Caco-2 (cell line): ENCODE measurements at regions of chr3 and their contacts with region 1.

Region 1: DNA sequence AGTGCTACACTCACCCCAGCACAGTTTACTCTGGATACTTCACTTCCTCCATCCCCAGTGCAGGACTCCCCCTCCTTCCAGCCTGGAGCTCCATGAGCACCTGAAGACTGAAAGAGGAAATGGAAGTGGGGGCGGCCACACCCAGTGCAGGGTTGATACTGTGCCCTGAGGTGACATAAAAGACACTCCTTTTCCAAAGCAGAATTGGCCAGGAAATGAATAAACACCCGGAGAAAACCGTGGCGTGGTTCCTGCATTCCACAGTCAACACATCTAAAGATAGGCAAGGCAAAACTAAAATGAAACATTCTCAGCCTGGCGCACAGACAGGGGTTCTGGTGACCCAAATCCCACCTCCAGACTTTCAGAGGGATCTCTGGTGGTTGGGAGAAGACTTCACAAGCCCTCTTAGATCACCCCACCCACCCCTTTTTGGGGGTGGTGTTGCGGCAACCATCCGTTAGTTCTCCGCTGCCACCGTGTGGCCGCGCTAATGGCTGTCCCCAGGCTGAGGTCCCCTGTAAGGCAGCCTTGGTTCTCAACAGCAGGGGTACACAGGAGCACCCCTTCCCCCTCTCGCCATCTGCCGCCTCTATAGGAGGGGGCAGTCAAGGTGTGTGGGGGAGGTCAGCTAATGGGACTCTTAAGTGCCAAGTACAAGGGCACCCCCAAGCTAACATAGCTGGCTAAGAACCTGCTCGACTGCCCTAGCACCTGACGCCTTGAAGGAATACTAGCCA is 2.5 kb upstream of the MST1R start:
- DNase-seq: peak; percentile 63 to 72
- H3K4me3 ChIP-seq: no peak overlapping the region
- H3K4me3 Mint-ChIP-seq: peak overlapping the region; percentile 58
- H3K27ac Mint-ChIP-seq: peak overlapping the region; percentile 71
- H3K4me1 ChIP-seq: peaks cover 46% of the 10 kb centered on the region
- H3K4me1 Mint-ChIP-seq: peaks cover 7% of the 10 kb centered on the region
- H3K27me3 ChIP-seq: no peaks in the 10 kb centered on the region
- H3K27me3 Mint-ChIP-seq: no peaks in the 10 kb centered on the region
- CTCF ChIP-seq: peak; percentile 69 to 90

Region 2: DNA sequence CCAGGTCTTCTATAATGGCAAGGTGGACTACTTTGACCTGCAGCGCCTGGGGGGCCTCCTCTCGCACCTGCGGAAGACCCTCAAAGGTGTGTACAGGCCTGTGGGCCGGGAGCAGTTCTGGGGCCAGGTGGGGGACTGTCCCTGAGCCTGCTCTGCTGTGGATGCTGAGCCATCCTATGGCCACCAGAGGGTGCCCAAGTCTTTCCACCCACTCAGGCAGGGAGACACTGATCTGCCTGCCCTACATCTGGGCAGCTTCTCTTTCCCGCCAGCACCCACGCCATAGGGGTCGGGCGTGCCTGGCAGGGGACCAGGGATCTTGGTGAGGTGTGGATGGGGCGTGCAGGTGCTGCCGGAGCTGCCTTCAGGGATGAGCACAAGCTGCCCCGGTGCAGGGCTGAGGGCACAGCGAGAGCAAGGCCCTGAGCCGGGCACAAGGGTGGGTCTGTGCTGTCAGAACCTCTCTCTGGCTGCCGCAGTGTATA is 202.7 kb before region 1 on chr3:
- CTCF ChIA-PET with region 1: no interaction called
- POLR2A ChIA-PET with region 1: no interaction called
- intact Hi-C with region 1: loop called (anchors 5 kb)
- DNase-seq: peak; percentile 67 to 72
- H3K4me3 ChIP-seq: no peak overlapping the region
- H3K4me3 Mint-ChIP-seq: no peak overlapping the region
- H3K27ac Mint-ChIP-seq: no peak overlapping the region
- H3K4me1 ChIP-seq: no peaks in the 10 kb centered on the region
- H3K4me1 Mint-ChIP-seq: no peaks in the 10 kb centered on the region
- H3K27me3 ChIP-seq: no peaks in the 10 kb centered on the region
- H3K27me3 Mint-ChIP-seq: no peaks in the 10 kb centered on the region
- CTCF ChIP-seq: peak; percentile 71 to 87

Region 3: GRCh38 chr3:49802719-49803464 is 103.3 kb before region 1 on chr3 and contains the start of gene INKA1:
- CTCF ChIA-PET with region 1: interaction called, 5 read pairs
- POLR2A ChIA-PET with region 1: no interaction called
- intact Hi-C with region 1: loop called (anchors 1 kb)
- DNase-seq: peak; percentile 82 to 89
- H3K4me3 ChIP-seq: peak within 1 kb of the TSS; percentile 74
- H3K4me3 Mint-ChIP-seq: peak within 1 kb of the TSS; percentile 91
- H3K27ac Mint-ChIP-seq: peak within 1 kb of the TSS; percentile 71
- H3K4me1 ChIP-seq: no peaks in the 10 kb centered on the region
- H3K4me1 Mint-ChIP-seq: peaks cover 16% of the 10 kb centered on the region
- H3K27me3 ChIP-seq: no peaks in the 10 kb centered on the region
- H3K27me3 Mint-ChIP-seq: peaks cover 2% of the 10 kb centered on the region
- CTCF ChIP-seq: peak; percentile 78 to 88
- total RNA-seq, gene INKA1: not detected in 2 replicates

Region 4: DNA sequence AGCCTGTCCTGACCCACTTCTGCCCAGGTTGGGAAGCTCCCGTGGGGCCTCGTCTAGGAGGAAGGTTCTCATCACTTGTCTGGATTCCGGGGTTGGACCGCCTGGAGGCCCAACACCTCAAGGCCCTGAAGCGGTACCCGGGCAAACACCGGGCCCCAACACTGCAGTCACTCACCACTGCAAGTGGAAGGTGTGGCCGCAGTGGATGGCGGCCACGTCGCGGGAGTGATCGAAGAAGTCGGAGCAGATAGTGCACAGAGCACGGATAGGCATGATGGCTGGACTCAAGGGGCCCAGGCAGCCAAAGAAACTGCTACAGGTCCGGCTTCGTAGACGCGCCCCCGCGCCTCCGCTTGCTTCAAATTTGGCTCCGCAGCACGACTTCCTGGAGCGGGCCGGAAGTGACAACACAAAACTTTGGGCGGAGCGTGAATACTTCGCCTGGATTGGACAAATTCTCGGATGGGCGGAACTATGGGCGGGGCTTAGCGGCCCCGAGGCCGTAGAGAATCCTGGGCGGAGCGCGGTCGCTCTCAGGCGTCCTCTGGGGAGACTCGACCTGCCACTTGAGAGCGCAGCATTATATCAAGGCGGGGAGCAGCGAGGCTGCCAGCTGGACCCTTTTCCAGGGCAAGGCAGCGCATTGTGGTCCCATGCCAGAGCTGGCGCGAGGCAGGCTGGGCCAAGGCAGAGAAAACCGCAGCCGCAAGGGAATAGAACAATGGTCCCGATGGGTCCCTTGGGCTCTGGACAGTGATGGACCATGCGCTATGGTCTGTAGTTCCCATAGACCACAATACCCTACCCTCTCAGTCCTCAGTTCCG is 49.8 kb before region 1 on chr3 and contains the start of gene TRAIP:
- CTCF ChIA-PET with region 1: no interaction called
- POLR2A ChIA-PET with region 1: no interaction called
- intact Hi-C with region 1: loop called (anchors 5 kb)
- DNase-seq: peak; percentile 92 to 94
- H3K4me3 ChIP-seq: peak within 1 kb of the TSS; percentile 87
- H3K4me3 Mint-ChIP-seq: peak within 1 kb of the TSS; percentile 93
- H3K27ac Mint-ChIP-seq: peak within 1 kb of the TSS; percentile 88
- H3K4me1 ChIP-seq: 0 out of 2 replicates have a peak, but pooled peaks cover 4% of the 10 kb centered on the region
- H3K4me1 Mint-ChIP-seq: peaks cover 6% of the 10 kb centered on the region
- H3K27me3 ChIP-seq: no peaks in the 10 kb centered on the region
- H3K27me3 Mint-ChIP-seq: no peaks in the 10 kb centered on the region
- CTCF ChIP-seq: no peak
- total RNA-seq, gene TRAIP: 25.1 and 28.0 TPM in 2 replicates

Region 5: GRCh38 chr3:49883998-49884397 is 22.2 kb before region 1 on chr3:
- CTCF ChIA-PET with region 1: no interaction called
- POLR2A ChIA-PET with region 1: no interaction called
- intact Hi-C with region 1: no loop called
- DNase-seq: no peak
- H3K4me3 ChIP-seq: no peak overlapping the region
- H3K4me3 Mint-ChIP-seq: no peak overlapping the region
- H3K27ac Mint-ChIP-seq: no peak overlapping the region
- H3K4me1 ChIP-seq: peaks cover 26% of the 10 kb centered on the region
- H3K4me1 Mint-ChIP-seq: peaks cover 7% of the 10 kb centered on the region
- H3K27me3 ChIP-seq: no peaks in the 10 kb centered on the region
- H3K27me3 Mint-ChIP-seq: no peaks in the 10 kb centered on the region
- CTCF ChIP-seq: no peak

Region 6: GRCh38 chr3:49929331-49930240 is 23.4 kb after region 1 on chr3 and contains the start of gene MON1A:
- CTCF ChIA-PET with region 1: interaction called, 5 read pairs
- POLR2A ChIA-PET with region 1: interaction called, 4 read pairs
- intact Hi-C with region 1: loop called (anchors 1 kb)
- DNase-seq: peak; percentile 97 to 99
- H3K4me3 ChIP-seq: peak within 1 kb of the TSS; percentile 60
- H3K4me3 Mint-ChIP-seq: peak within 1 kb of the TSS; percentile 97
- H3K27ac Mint-ChIP-seq: peak within 1 kb of the TSS; percentile 94
- H3K4me1 ChIP-seq: peaks cover 21% of the 10 kb centered on the region
- H3K4me1 Mint-ChIP-seq: peaks cover 8% of the 10 kb centered on the region
- H3K27me3 ChIP-seq: no peaks in the 10 kb centered on the region
- H3K27me3 Mint-ChIP-seq: no peaks in the 10 kb centered on the region
- CTCF ChIP-seq: peak; percentile 33 to 45
- total RNA-seq, gene MON1A: 7.4 and 7.7 TPM in 2 replicates